Transverse colon (tissue), 4 donors: ENCODE measurements at regions of chr3 and their contacts with region 1.

Region 1: GRCh38 chr3:126284258-126284904 is 72.8 kb downstream of the KLF15 start:
- DNase-seq: no peak
- H3K4me3 ChIP-seq: no peak overlapping the region
- H3K27ac ChIP-seq: no peak overlapping the region
- H3K4me1 ChIP-seq: peaks cover 6 to 20% (median 10%) of the 10 kb centered on the region in 4 donors
- H3K27me3 ChIP-seq: peaks cover 54% of the 10 kb centered on the region
- CTCF ChIP-seq: no peak
- EP300 ChIP-seq: no peak
- POLR2A ChIP-seq: no peak

Region 2: DNA sequence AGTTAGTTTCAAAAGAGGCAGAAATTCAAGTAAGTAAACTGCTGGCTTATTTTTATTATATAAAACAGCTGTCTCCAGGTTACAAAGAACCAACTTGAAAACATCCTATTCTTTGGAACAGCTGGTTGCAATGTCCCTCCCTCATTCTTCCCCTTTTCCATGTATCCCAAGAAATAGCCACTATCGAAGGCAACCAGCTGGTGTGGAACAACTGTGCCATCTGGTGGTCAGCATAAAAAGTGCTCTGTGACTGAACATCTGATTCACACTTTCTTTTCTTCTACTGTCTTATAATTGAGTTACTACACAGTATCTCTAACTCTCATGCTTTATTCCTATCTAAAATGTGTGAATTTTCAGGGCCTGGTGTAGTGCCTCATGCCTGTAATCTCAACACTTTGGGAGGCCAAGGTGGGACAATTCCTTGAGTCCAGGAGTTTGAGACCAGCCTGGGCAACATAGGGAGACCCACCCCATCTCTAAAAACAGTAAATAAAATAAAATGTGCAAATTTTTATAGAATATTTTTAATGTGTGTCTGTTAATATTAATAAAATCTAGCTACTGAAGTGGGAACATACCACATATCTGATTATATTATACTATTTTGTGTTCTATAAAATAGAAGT is 698.7 kb before region 1 on chr3:
- in situ Hi-C with region 1: no loop called
- intact Hi-C with region 1: no loop called
- DNase-seq: peak; percentile 67
- H3K4me3 ChIP-seq: no peak overlapping the region
- H3K27ac ChIP-seq: no peak overlapping the region
- H3K4me1 ChIP-seq: peaks cover 0 to 41% (median 8%) of the 10 kb centered on the region in 4 donors
- H3K27me3 ChIP-seq: no peaks in the 10 kb centered on the region
- CTCF ChIP-seq: peak; percentile 78 to 87 (median 85)
- EP300 ChIP-seq: no peak
- POLR2A ChIP-seq: no peak

Region 3: DNA sequence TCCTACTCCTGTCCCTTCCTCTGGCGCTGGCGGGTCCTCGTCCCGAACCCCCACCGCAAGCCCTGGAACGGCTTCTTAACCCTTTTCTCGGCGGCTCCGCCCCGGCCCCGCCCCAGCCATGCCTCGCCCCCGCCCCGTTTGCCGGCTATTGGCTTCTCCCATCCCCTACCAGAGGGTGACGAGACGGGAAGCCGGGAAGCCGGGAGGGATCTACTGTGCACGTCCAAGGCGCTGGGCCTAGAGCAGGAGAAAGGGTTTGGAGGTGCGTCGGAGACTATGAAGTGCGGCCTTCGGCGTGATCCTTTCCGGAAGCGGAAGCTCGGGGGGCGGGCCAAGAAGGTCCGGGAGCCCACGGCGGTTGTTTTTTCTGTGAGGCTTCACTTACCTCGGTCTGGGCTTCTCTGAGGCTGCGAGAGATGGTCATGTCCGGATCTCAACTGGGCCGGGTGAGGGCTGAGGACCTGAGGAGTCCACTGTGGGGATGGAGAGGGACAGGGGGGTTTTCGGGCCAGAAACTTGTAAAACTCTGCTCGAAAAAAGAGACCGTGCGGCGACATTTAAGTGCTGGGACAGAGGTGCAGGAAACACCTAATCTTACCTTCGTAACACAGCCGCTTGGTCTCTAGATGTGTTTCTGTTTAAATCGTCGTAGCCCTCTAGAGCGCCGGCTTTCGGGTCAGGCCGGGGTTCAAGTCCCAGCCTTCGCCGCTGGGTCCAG is 294.0 kb before region 1 on chr3:
- in situ Hi-C with region 1: no loop called
- intact Hi-C with region 1: no loop called
- DNase-seq: peak; percentile 84
- H3K4me3 ChIP-seq: peak overlapping the region; percentile 53 to 73 (median 62)
- H3K27ac ChIP-seq: peak overlapping the region; percentile 78 to 88 (median 83)
- H3K4me1 ChIP-seq: peaks cover 0 to 12% (median 6%) of the 10 kb centered on the region in 4 donors
- H3K27me3 ChIP-seq: no peaks in the 10 kb centered on the region
- CTCF ChIP-seq: no peak
- EP300 ChIP-seq: no peak
- POLR2A ChIP-seq: peak; percentile 68

Region 4: GRCh38 chr3:126154391-126155279 is 129.7 kb before region 1 on chr3:
- in situ Hi-C with region 1: no loop called
- intact Hi-C with region 1: loop called (anchors 5 kb)
- DNase-seq: no peak
- H3K4me3 ChIP-seq: no peak overlapping the region
- H3K27ac ChIP-seq: no peak overlapping the region
- H3K4me1 ChIP-seq: no peaks in the 10 kb centered on the region
- H3K27me3 ChIP-seq: no peaks in the 10 kb centered on the region
- CTCF ChIP-seq: no peak
- EP300 ChIP-seq: no peak
- POLR2A ChIP-seq: no peak

Region 5: DNA sequence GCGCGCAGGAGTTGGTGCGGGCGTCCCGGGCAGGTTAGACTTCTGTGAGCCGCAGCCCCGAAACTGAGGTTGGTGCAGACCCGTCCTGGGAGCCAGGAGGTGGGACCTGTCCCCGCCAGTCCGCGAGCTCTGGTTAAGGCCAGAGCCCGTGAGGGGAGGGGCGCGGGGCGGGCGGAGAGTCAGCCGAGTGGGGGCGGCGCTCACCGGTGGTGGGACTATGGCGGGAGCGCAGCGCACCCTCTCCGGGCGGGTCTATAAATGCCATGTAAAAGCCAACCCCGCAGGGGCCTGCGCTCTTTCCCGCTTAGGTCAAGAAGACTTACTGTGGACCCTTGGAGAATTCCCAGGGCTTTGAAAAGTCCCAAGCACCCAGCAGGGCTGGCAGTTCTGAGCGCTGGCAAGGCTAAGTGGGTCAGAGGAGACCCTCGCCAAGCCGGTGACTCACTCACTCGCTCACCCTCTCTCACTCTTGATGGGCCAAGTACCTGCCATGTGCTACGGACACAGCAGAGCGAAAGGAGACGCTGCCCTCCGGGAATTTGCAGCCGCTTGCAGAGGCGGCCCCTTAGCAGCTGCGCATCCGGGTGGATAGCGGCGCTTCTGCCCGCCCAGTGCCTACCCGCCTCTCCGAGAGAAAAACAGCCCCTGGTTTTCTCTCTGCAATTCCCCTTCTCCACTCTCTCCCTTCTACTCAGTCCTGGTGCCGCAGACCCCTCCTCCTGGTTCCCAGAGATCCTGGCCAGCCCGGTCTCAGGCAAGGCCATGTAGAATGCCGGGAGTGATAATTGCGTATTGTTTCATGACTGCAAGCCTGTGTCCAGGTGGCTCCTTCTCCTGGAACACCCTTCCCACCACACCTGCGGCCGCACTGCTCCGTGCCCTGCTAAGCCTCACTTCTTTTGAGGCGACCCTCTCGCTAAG is 103.6 kb before region 1 on chr3 and contains the start of gene ALDH1L1:
- in situ Hi-C with region 1: no loop called
- intact Hi-C with region 1: no loop called
- DNase-seq: peak; percentile 57
- H3K4me3 ChIP-seq: peak within 1 kb of the TSS; percentile 49 to 60 (median 52)
- H3K27ac ChIP-seq: peak within 1 kb of the TSS; percentile 80 to 88 (median 83)
- H3K4me1 ChIP-seq: peaks cover 5 to 25% (median 17%) of the 10 kb centered on the region in 4 donors
- H3K27me3 ChIP-seq: peaks cover 40% of the 10 kb centered on the region
- CTCF ChIP-seq: no peak
- EP300 ChIP-seq: peak; percentile 66
- POLR2A ChIP-seq: peak; percentile 44
- total RNA-seq, gene ALDH1L1: 5.9 to 32.2 (median 16.1) TPM